ENCODE measurements at regions of chr13 and their contacts with region 1.

Region 1: GRCh38 chr13:49792550-49793324 is at the start of gene KPNA3:
- DNase-seq: peak; percentile 88 to 99 (median 96)

Region 2: DNA sequence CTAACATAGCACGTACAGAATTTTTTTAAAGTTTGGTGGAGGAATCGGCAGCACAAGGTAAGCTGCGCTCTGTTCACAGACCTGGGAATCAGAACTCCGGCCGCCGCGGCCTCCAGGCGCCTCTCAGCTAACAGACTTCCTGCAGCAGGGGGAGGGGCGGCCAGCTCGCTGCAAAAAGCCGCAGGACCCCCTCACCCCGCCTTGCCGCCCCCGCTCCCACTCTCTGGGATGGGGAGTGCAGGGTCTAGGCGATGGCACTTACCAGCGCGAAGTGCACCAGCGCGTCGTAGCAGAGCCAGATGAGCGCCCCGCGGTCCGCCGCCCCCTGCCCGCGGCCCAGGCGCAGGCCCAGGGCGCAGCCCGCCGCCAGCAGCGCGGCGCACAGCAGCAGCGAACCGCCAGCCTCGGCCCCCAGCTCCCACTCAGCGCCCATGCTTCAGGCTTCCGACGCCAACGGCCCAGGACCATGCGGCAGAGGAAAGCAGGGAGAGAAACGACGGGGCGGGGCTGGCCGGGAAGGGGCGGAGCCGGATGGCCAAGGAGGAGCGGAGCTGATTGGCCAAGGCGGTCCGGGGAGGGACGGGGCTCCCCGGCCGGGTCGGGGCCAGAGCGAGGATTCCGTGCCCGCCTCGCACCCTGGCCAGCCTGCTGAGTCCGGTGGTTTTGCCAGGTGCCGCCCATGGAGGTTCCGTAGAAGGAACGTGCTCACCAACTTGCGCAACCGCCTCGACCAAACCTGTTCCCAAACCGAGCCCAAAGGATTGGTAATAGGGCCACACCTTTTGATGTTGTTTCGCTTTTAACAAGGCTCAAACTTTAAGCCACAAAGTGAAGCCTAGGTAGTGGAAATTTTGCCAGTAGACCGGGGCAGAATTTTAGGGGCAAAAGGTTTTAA is 101.5 kb before region 1 on chr13 and contains the start of gene EBPL:
- intact Hi-C with region 1: loop called (anchors 5 kb)
- DNase-seq: peak; percentile 80 to 98 (median 88)

Region 3: DNA sequence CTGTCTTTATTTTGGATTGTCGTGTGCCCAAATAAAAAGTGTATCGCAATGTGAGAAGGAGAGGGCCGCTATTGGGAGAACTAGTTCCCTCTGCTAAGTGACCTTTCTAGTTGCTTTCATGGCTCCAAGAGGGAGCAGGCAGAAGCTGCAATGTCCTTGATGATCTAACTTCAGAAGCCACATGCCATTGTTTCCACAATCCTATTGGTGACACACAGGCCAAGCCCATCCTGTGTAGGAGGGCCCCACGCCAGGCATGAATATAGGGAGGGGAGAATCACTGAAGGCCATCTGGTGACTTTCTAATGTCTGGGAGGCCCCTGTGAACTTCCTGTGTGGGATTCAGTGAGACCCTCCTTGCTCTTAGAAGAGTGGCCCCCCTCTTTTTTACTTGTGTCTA is 47.5 kb after region 1 on chr13:
- intact Hi-C with region 1: loop called (anchors 5 kb)
- DNase-seq: no peak

Region 4: DNA sequence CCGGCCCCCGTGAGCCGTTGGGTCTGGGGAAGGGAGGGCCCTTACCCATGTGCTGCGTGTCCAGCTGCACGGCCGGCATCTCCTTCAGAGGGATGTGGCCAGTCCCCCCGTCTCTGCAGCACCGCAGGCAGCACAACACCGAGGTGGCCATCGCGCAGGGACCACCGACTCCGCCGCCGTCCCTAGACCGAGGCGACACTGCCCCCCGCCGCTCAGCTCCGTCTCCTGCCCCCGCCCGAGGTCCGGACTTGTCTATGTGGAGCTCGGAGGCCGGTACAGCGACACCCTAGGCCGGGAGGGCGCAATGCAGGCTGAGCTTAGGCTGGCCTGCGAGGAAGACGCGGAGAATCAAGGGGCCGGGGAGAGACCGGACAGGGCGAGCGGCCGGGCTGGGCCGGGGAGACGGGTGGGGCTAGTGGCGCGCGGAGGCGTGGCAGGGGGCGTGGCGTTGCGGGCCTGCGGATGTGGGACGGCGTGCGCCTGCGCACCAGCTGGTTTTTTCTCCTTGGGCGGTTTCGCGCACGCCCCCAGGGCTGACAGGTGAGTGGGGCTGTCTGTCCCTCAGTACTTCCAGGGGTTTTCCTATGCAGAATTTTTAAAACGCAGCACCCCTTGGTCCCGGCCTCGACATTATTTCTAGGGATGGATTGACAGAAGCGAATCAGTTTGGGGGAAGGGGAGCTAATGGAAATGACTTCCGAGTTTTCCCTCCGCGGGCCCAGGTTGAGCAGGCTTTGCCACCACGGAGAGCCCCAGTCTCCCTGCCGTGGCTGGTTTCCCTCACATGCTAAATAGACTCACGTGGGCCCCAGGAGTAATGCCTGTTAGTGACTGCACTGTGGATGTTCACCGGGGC is 143.6 kb after region 1 on chr13 and contains the start of gene SPRYD7:
- intact Hi-C with region 1: loop called (anchors 5 kb)
- DNase-seq: peak; percentile 95 to 100 (median 98)

Measured in posterior cingulate gyrus (tissue), 11 donors.